WTC11 (cell line): ENCODE measurements at regions of chr14 and their contacts with region 1.

Region 1: DNA sequence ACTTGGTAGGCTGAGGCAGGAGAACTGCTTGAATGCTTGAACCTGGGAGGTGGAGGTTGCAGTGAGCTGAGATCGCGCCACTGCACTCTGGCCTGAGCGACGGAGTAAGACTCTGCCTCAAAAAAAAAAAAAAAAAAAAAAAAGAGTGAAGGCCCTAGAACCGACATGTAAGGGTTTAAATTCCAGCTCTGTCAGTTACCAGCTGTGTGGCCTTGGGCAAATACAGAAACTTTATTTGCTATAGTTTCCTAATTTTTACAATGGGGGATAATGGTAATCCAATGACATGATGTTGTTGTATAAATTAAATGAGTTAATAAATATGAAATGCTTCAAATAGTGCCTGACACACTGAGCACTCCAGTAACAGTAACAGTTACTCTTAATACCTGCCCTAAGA is 19.6 kb upstream of the PYGL start:
- DNase-seq: no peak
- ATAC-seq: no peak
- H3K4me3 Mint-ChIP-seq: no peak overlapping the region
- H3K27ac Mint-ChIP-seq: no peak overlapping the region
- H3K4me1 Mint-ChIP-seq: no peaks in the 10 kb centered on the region
- H3K27me3 Mint-ChIP-seq: no peaks in the 10 kb centered on the region
- CTCF ChIP-seq: no peak

Region 2: GRCh38 chr14:50846226-50846880 is 117.6 kb before region 1 on chr14:
- CTCF ChIA-PET with region 1: no interaction called
- POLR2A ChIA-PET with region 1: interaction called, 10 read pairs
- DNase-seq: no peak
- ATAC-seq: no peak
- H3K4me3 Mint-ChIP-seq: no peak overlapping the region
- H3K27ac Mint-ChIP-seq: no peak overlapping the region
- H3K4me1 Mint-ChIP-seq: 0 out of 2 replicates have a peak, but pooled peaks cover 6% of the 10 kb centered on the region
- H3K27me3 Mint-ChIP-seq: no peaks in the 10 kb centered on the region
- CTCF ChIP-seq: no peak

Region 3: GRCh38 chr14:50978888-50979287 is 15.0 kb after region 1 on chr14:
- CTCF ChIA-PET with region 1: no interaction called
- POLR2A ChIA-PET with region 1: no interaction called
- DNase-seq: no peak
- ATAC-seq: no peak
- H3K4me3 Mint-ChIP-seq: no peak overlapping the region
- H3K27ac Mint-ChIP-seq: no peak overlapping the region
- H3K4me1 Mint-ChIP-seq: peaks cover 10% of the 10 kb centered on the region
- H3K27me3 Mint-ChIP-seq: no peaks in the 10 kb centered on the region; the same call in 1 of the 2 replicates
- CTCF ChIP-seq: no peak

Region 4: GRCh38 chr14:51066576-51066975 is 102.7 kb after region 1 on chr14:
- CTCF ChIA-PET with region 1: no interaction called
- POLR2A ChIA-PET with region 1: no interaction called
- DNase-seq: no peak
- ATAC-seq: no peak
- H3K4me3 Mint-ChIP-seq: no peak overlapping the region
- H3K27ac Mint-ChIP-seq: no peak overlapping the region
- H3K4me1 Mint-ChIP-seq: peaks cover 7% of the 10 kb centered on the region
- H3K27me3 Mint-ChIP-seq: no peaks in the 10 kb centered on the region
- CTCF ChIP-seq: no peak